Caco-2 (cell line): ENCODE measurements at regions of chr4 and their contacts with region 1.

Region 1: DNA sequence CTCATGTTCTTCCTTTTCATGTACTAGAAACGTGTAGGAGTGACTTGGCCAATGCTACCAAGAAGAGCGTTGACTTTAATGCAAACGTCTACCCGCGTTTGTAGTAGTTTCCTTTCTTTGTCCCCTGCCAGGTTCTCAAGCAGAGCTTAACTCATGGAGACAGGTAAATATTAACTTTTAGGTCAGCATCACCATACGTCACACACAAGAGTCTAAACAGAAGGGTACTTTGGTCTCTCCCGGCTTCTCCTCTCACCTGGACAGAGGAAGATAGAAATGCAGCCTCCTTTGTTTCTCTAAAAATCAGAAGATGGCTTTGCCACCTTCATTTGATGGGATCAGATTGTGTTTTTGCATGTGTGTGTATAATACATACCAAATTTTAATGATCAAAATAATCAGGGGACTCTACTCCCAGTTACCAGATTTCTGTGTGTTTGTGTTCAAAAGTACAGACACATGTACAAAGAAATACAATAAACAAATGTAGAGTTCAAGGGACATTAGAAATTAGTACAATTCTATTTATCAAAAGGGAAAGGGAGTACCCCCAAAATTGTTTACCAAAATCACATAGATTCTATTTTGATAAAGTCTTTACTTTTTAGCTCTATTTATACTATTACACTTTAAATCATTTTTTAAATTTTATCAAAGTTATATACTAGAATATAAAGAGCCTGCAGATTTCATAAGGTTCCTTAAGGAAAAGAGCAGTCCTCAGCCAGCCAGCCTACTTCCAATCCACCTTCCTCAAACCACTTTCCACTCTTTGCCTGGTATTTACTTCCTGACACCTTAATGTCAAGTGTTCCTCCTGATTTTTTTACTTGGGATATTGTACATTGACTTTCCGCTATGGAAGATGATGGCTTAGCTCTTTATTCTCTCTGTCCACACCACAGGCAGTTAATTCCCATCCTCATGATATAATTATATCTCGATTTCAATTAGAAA is 195.5 kb downstream of the RELL1 start:
- DNase-seq: peak in 1 of 2 experiments; percentile 57
- H3K4me3 ChIP-seq: peak overlapping the region; percentile 22
- H3K4me3 Mint-ChIP-seq: peak overlapping the region; percentile 70
- H3K27ac Mint-ChIP-seq: peak overlapping the region; percentile 85
- H3K4me1 ChIP-seq: peaks cover 24% of the 10 kb centered on the region
- H3K4me1 Mint-ChIP-seq: peaks cover 26% of the 10 kb centered on the region
- H3K27me3 ChIP-seq: no peaks in the 10 kb centered on the region
- H3K27me3 Mint-ChIP-seq: no peaks in the 10 kb centered on the region
- CTCF ChIP-seq: no peak

Region 2: GRCh38 chr4:37299468-37299867 is 191.2 kb before region 1 on chr4:
- CTCF ChIA-PET with region 1: no interaction called
- POLR2A ChIA-PET with region 1: no interaction called
- intact Hi-C with region 1: no loop called
- DNase-seq: no peak
- H3K4me3 ChIP-seq: no peak overlapping the region
- H3K4me3 Mint-ChIP-seq: no peak overlapping the region
- H3K27ac Mint-ChIP-seq: no peak overlapping the region
- H3K4me1 ChIP-seq: no peaks in the 10 kb centered on the region
- H3K4me1 Mint-ChIP-seq: no peaks in the 10 kb centered on the region
- H3K27me3 ChIP-seq: no peaks in the 10 kb centered on the region
- H3K27me3 Mint-ChIP-seq: peaks cover 10% of the 10 kb centered on the region
- CTCF ChIP-seq: no peak

Region 3: GRCh38 chr4:37471971-37472370 is 18.7 kb before region 1 on chr4:
- CTCF ChIA-PET with region 1: no interaction called
- POLR2A ChIA-PET with region 1: no interaction called
- intact Hi-C with region 1: loop called (anchors 1 kb)
- DNase-seq: peak; percentile 68 to 83
- H3K4me3 ChIP-seq: no peak overlapping the region
- H3K4me3 Mint-ChIP-seq: peak overlapping the region; percentile 39
- H3K27ac Mint-ChIP-seq: peak overlapping the region; percentile 75
- H3K4me1 ChIP-seq: peaks cover 70% of the 10 kb centered on the region
- H3K4me1 Mint-ChIP-seq: peaks cover 38% of the 10 kb centered on the region
- H3K27me3 ChIP-seq: no peaks in the 10 kb centered on the region
- H3K27me3 Mint-ChIP-seq: no peaks in the 10 kb centered on the region
- CTCF ChIP-seq: no peak